Activated T-helper 1 cell treated with anti-CD3 and anti-CD28 coated beads, Interleukin-12 subunit alpha, Interleukin-12 subunit beta, Interleukin-2, Interleukin-4 antibody, amounts not matched to agents 30 ng/mL and 10 ng/mL and 1 ng/mL, durations not matched to agents 14 hours and 24 hours and 36 hours (primary cell): ENCODE measurements at regions of chr17 and their contacts with region 1.

Region 1: GRCh38 chr17:75046582-75047289 is at the starts of genes ATP5PD and KCTD2:
- DNase-seq: peak; percentile 93
- H3K4me3 Mint-ChIP-seq: peak within 1 kb of the TSS; percentile 100
- H3K27ac Mint-ChIP-seq: peak within 1 kb of the TSS; percentile 98
- H3K4me1 Mint-ChIP-seq: peaks cover 35% of the 10 kb centered on the region
- H3K27me3 Mint-ChIP-seq: no peaks in the 10 kb centered on the region
- total RNA-seq, gene ATP5PD: 152 and 165 TPM in 2 replicates
- total RNA-seq, gene KCTD2: 21.2 and 22.6 TPM in 2 replicates

Region 2: GRCh38 chr17:75034236-75034908 is 12.4 kb before region 1 on chr17:
- intact Hi-C with region 1: loop called (anchors 1 kb)
- DNase-seq: peak; percentile 79
- H3K4me3 Mint-ChIP-seq: peak overlapping the region; percentile 93
- H3K27ac Mint-ChIP-seq: peak overlapping the region; percentile 94
- H3K4me1 Mint-ChIP-seq: peaks cover 52% of the 10 kb centered on the region
- H3K27me3 Mint-ChIP-seq: peaks cover 10% of the 10 kb centered on the region

Region 3: GRCh38 chr17:75087558-75088453 is 41.1 kb after region 1 on chr17 and contains the start of gene SLC16A5:
- intact Hi-C with region 1: loop called (anchors 5 kb)
- DNase-seq: peak; percentile 49
- H3K4me3 Mint-ChIP-seq: peak within 1 kb of the TSS; percentile 80
- H3K27ac Mint-ChIP-seq: peak within 1 kb of the TSS; percentile 59
- H3K4me1 Mint-ChIP-seq: peaks cover 33% of the 10 kb centered on the region
- H3K27me3 Mint-ChIP-seq: no peaks in the 10 kb centered on the region
- total RNA-seq, gene SLC16A5: 5.5 and 7.2 TPM in 2 replicates

Region 4: GRCh38 chr17:75154195-75155106 is 107.7 kb after region 1 on chr17 and contains the start of gene JPT1:
- intact Hi-C with region 1: loop called (anchors 5 kb)
- DNase-seq: peak; percentile 97
- H3K4me3 Mint-ChIP-seq: peak within 1 kb of the TSS; percentile 97
- H3K27ac Mint-ChIP-seq: peak within 1 kb of the TSS; percentile 93
- H3K4me1 Mint-ChIP-seq: peaks cover 34% of the 10 kb centered on the region
- H3K27me3 Mint-ChIP-seq: no peaks in the 10 kb centered on the region
- total RNA-seq, gene JPT1: 271 and 299 TPM in 2 replicates